ENCODE measurements at regions of chrX and their contacts with region 1.

Region 1: GRCh38 chrX:76433219-76433618 is 5.7 kb downstream of the MAGEE1 start:
- DNase-seq: no peak
- H3K4me3 ChIP-seq: no peak overlapping the region
- H3K27ac ChIP-seq: no peak overlapping the region
- H3K4me1 ChIP-seq: peaks cover 0 to 9% (median 3%) of the 10 kb centered on the region in 4 donors
- H3K27me3 ChIP-seq: no peaks in the 10 kb centered on the region
- CTCF ChIP-seq: no peak

Region 2: GRCh38 chrX:75156021-75156945 is 1276.9 kb before region 1 on chrX and contains the start of gene ABCB7:
- intact Hi-C with region 1: loop called (anchors 5 kb)
- DNase-seq: peak; percentile 34 to 68
- H3K4me3 ChIP-seq: peak within 1 kb of the TSS; percentile 60 to 70
- H3K27ac ChIP-seq: peak within 1 kb of the TSS; percentile 77 to 90
- H3K4me1 ChIP-seq: peaks cover 0 to 14% (median 0%) of the 10 kb centered on the region in 4 donors
- H3K27me3 ChIP-seq: no peaks in the 10 kb centered on the region
- CTCF ChIP-seq: peak in 1 of 2 experiments; percentile 13